Activated T-helper 2 cell treated with anti-CD3 and anti-CD28 coated beads, Interferon-gamma antibody, Interleukin-2, Interleukin-4, amounts not matched to agents 10 μg/mL and 5 μg/mL and 100 μg/mL, durations not matched to agents 14 hours and 24 hours and 36 hours (primary cell): ENCODE measurements at regions of chr14 and their contacts with region 1.

Region 1: DNA sequence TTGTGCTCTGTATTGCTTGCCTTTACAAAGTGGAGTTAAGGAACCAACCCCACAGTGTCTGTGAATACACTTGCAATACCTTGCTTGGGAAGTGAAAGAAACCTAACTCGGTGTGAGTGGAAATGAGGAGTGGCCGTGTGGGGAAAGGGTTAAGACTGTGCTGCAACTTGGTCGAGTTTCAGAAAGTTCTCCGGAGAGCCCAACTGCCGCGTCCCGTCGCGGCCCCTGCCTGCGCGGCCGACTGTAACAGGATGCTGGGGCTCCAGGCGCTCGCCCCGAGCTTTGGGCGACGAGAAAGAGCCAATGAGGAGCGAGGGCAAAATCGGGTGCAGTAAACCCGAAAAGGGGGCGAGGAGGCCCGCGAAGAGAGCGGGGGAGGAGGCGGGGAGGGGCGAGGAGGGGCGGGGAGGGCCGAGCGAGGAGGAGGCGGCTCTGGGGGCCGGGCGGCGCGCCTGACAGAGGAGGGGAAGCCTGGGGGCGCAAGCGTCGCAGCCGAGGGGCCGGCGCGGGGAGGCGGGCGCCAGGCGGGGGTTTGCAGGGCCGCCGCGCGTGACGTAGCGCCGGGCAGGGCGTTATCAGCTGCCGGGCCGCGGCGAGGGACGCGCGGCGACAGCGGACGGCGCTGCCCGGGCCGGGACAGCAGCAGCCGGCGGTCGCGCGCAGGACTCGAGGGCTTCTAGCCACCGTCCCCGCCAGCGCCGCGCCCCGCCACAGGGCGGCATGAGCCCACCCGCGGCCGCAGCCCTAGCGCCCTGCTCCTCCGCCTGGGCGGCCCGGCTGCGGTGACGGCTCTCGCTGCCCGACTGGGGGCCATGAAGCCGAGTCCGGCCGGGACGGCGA is at the start of gene DACT1:
- DNase-seq: peak; percentile 66
- H3K4me3 Mint-ChIP-seq: peak within 1 kb of the TSS; percentile 88
- H3K27ac Mint-ChIP-seq: peak within 1 kb of the TSS; percentile 89
- H3K4me1 Mint-ChIP-seq: peaks cover 42% of the 10 kb centered on the region
- H3K27me3 Mint-ChIP-seq: peaks cover 23% of the 10 kb centered on the region
- total RNA-seq, gene DACT1: 6.6 and 7.8 TPM in 2 replicates

Region 2: DNA sequence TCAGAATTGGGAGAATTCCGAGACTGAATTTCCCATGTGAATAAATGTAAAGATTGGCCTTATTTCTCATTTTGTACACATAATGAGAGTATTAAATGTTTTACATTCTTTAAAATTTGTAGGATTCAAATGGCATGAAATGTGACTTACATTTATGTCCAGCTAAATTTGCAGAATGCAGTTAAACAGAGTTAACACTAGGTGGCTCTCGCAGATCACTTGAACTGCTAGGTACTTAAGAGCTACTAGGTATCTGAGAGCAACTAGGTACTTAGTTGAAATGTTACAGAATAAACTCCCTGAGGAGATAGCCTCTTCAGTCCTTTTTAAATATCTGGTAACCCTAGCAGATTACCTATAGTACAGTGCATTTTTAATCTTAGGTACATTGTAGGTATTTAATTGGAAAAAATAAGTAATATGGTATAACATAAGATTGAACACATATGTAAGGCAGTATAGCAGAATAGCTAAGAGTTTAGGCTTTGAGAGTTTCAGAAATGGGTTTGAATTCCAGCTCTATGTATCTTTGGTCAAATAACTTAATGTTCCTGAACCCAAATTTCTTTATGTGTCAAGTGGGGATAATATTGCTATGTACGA is 136.3 kb before region 1 on chr14:
- intact Hi-C with region 1: loop called (anchors 1 kb)
- DNase-seq: no peak
- H3K4me3 Mint-ChIP-seq: no peak overlapping the region
- H3K27ac Mint-ChIP-seq: no peak overlapping the region
- H3K4me1 Mint-ChIP-seq: no peaks in the 10 kb centered on the region
- H3K27me3 Mint-ChIP-seq: no peaks in the 10 kb centered on the region

Region 3: DNA sequence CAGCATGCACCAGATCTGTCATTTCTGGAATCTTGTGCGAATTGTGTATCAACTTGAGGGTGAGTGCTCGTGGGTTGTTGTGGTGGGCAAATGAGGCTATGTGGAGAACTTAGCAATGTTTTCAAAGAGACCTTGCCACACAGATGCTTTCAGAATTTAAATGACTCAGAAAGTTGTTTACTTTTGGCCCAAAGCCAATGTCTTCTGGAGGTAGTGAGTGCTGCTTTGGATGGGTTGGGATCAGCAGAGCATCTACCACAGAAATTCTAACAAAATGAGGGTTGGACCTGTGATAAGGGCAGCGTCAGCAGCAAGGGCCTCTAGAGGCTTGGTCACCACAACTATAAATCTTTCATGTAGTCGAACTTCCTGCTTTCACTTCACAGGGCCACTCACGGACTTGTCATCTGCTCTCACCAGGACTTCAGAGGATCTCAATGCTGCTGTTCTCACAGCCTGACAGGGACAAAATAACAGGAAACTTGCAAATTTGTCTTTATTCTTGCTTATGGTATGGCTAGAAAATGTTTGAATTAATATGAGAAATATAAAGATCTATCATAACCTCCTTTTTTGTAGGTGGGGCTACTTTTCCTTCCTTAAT is 111.6 kb after region 1 on chr14:
- intact Hi-C with region 1: loop called (anchors 2 kb)
- DNase-seq: peak; percentile 27
- H3K4me3 Mint-ChIP-seq: no peak overlapping the region
- H3K27ac Mint-ChIP-seq: peak overlapping the region; percentile 21
- H3K4me1 Mint-ChIP-seq: peaks cover 15% of the 10 kb centered on the region
- H3K27me3 Mint-ChIP-seq: no peaks in the 10 kb centered on the region

Region 4: GRCh38 chr14:59020382-59020781 is 382.8 kb after region 1 on chr14:
- intact Hi-C with region 1: loop called (anchors 5 kb)
- DNase-seq: no peak
- H3K4me3 Mint-ChIP-seq: no peak overlapping the region
- H3K27ac Mint-ChIP-seq: no peak overlapping the region
- H3K4me1 Mint-ChIP-seq: no peaks in the 10 kb centered on the region
- H3K27me3 Mint-ChIP-seq: peaks cover 2% of the 10 kb centered on the region